Activated B cell treated with CpG ODN at 0.5 μM for 24 hours (primary cell): ENCODE measurements at regions of chrX and their contacts with region 1.

Region 1: DNA sequence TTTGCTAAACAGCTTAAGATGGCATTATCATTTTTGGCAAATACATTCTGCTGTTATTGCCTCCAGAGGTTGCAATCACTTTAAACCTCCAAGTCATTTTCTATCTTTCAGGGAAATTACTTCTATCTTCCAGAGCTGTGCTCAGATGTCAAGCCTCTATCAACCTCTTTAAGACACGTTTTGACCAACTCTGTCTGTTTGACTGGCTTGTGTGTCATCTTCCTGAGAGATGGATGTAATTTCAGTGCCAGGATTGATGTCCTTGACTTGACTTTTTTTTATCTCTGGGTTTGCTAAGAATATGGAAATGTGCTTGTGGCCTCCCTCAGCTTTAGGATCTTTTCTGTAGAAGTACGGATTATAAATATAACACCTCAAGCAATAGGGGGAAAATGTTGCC is 263.4 kb downstream of the GLUD2 start:
- DNase-seq: no peak
- ATAC-seq: no peak
- H3K4me3 Mint-ChIP-seq: no peak overlapping the region
- H3K27ac Mint-ChIP-seq: no peak overlapping the region
- H3K4me1 Mint-ChIP-seq: no peaks in the 10 kb centered on the region
- H3K27me3 Mint-ChIP-seq: no peaks in the 10 kb centered on the region
- CTCF ChIP-seq: no peak

Region 2: DNA sequence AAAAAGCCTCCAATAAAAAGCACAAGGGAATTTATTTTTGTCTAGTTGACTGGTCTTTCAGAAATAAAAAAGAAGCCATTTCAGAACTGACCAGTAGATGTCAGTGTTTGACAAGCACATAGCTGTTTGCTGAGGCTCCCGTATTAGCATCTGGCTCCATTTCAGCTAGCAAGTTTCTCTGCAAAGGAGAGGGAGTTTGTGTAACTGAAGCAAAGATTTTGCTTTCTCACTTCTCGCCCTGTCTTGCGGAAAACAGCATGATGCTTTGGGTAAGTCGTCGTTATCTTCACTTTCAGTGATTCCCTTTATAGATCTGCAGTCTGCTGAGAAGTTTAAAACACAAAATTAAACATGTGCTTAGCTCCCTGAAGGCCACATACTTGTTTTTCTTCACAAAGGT is 520.7 kb before region 1 on chrX:
- CTCF ChIA-PET with region 1: no interaction called
- POLR2A ChIA-PET with region 1: no interaction called
- intact Hi-C with region 1: loop called (anchors 10 kb)
- DNase-seq: no peak
- ATAC-seq: no peak
- H3K4me3 Mint-ChIP-seq: no peak overlapping the region
- H3K27ac Mint-ChIP-seq: no peak overlapping the region
- H3K4me1 Mint-ChIP-seq: no peaks in the 10 kb centered on the region
- H3K27me3 Mint-ChIP-seq: no peaks in the 10 kb centered on the region
- CTCF ChIP-seq: no peak

Region 3: GRCh38 chrX:121746105-121746504 is 435.3 kb after region 1 on chrX:
- CTCF ChIA-PET with region 1: no interaction called
- POLR2A ChIA-PET with region 1: no interaction called
- intact Hi-C with region 1: no loop called
- DNase-seq: no peak
- ATAC-seq: no peak
- H3K4me3 Mint-ChIP-seq: no peak overlapping the region
- H3K27ac Mint-ChIP-seq: no peak overlapping the region
- H3K4me1 Mint-ChIP-seq: no peaks in the 10 kb centered on the region
- H3K27me3 Mint-ChIP-seq: no peaks in the 10 kb centered on the region
- CTCF ChIP-seq: no peak